IMR-90 (cell line): ENCODE measurements at regions of chr1 and their contacts with region 1.

Region 1: GRCh38 chr1:172906778-172907592 is 143.8 kb downstream of the TNFSF18 start:
- DNase-seq: peak; percentile 93
- ATAC-seq: 0 out of 2 replicates have a peak, but pooled peaks have one; percentile 3
- H3K4me3 ChIP-seq: no peak overlapping the region
- H3K27ac ChIP-seq: peak overlapping the region; percentile 67
- H3K4me1 ChIP-seq: peaks cover 23% of the 10 kb centered on the region
- H3K27me3 ChIP-seq: no peaks in the 10 kb centered on the region
- CTCF ChIP-seq: no peak
- POLR2A ChIP-seq: 0 out of 2 replicates have a peak, but pooled peaks have one; percentile 22
- RAD21 ChIP-seq: no peak

Region 2: GRCh38 chr1:172845371-172845770 is 61.6 kb before region 1 on chr1:
- CTCF ChIA-PET with region 1: no interaction called
- POLR2A ChIA-PET with region 1: no interaction called
- dilution Hi-C with region 1: no loop called
- in situ Hi-C with region 1: no loop called
- intact Hi-C with region 1: no loop called
- DNase-seq: peak; percentile 20
- ATAC-seq: no peak
- H3K4me3 ChIP-seq: no peak overlapping the region
- H3K27ac ChIP-seq: no peak overlapping the region
- H3K4me1 ChIP-seq: peaks cover 2% of the 10 kb centered on the region; the same call in 1 of the 2 replicates
- H3K27me3 ChIP-seq: no peaks in the 10 kb centered on the region
- CTCF ChIP-seq: no peak
- POLR2A ChIP-seq: no peak
- RAD21 ChIP-seq: no peak

Region 3: GRCh38 chr1:172951730-172952365 is 44.9 kb after region 1 on chr1:
- CTCF ChIA-PET with region 1: interaction called, 4 read pairs
- POLR2A ChIA-PET with region 1: interaction called, 10 read pairs
- dilution Hi-C with region 1: no loop called
- in situ Hi-C with region 1: no loop called
- intact Hi-C with region 1: loop called (anchors 1 kb)
- DNase-seq: peak; percentile 91
- ATAC-seq: peak; percentile 19
- H3K4me3 ChIP-seq: no peak overlapping the region
- H3K27ac ChIP-seq: peak overlapping the region; percentile 81; the same call in 1 of the 2 replicates
- H3K4me1 ChIP-seq: peaks cover 32% of the 10 kb centered on the region
- H3K27me3 ChIP-seq: no peaks in the 10 kb centered on the region
- CTCF ChIP-seq: no peak
- POLR2A ChIP-seq: no peak
- RAD21 ChIP-seq: no peak

Region 4: GRCh38 chr1:173002891-173003838 is 96.2 kb after region 1 on chr1:
- CTCF ChIA-PET with region 1: no interaction called
- POLR2A ChIA-PET with region 1: interaction called, 13 read pairs
- dilution Hi-C with region 1: no loop called
- in situ Hi-C with region 1: no loop called
- intact Hi-C with region 1: no loop called
- DNase-seq: peak; percentile 80
- ATAC-seq: peak; percentile 71
- H3K4me3 ChIP-seq: no peak overlapping the region
- H3K27ac ChIP-seq: no peak overlapping the region
- H3K4me1 ChIP-seq: peaks cover 4% of the 10 kb centered on the region; the same call in 1 of the 2 replicates
- H3K27me3 ChIP-seq: no peaks in the 10 kb centered on the region
- CTCF ChIP-seq: no peak
- POLR2A ChIP-seq: no peak
- RAD21 ChIP-seq: no peak

Region 5: GRCh38 chr1:173202430-173203145 is 295.6 kb after region 1 on chr1:
- CTCF ChIA-PET with region 1: interaction called, 6 read pairs
- POLR2A ChIA-PET with region 1: interaction called, 10 read pairs
- dilution Hi-C with region 1: no loop called
- in situ Hi-C with region 1: no loop called
- intact Hi-C with region 1: loop called (anchors 2 kb)
- DNase-seq: peak; percentile 95
- ATAC-seq: peak; percentile 68
- H3K4me3 ChIP-seq: no peak overlapping the region
- H3K27ac ChIP-seq: peak overlapping the region; percentile 36; the same call in 1 of the 2 replicates
- H3K4me1 ChIP-seq: peaks cover 14% of the 10 kb centered on the region
- H3K27me3 ChIP-seq: no peaks in the 10 kb centered on the region
- CTCF ChIP-seq: peak; percentile 87
- POLR2A ChIP-seq: no peak; the same call in 1 of the 2 replicates
- RAD21 ChIP-seq: peak; percentile 94